ENCODE measurements at regions of chr9 and their contacts with region 1.

Region 1: GRCh38 chr9:19925817-19926503 is 137.1 kb upstream of the SLC24A2 start:
- DNase-seq: peak; percentile 70
- ATAC-seq: peak; percentile 98
- H3K4me3 ChIP-seq: peak overlapping the region; percentile 35
- H3K27ac ChIP-seq: no peak overlapping the region
- H3K4me1 ChIP-seq: peaks cover 6% of the 10 kb centered on the region
- H3K27me3 ChIP-seq: no peaks in the 10 kb centered on the region
- CTCF ChIP-seq: peak; percentile 96

Region 2: DNA sequence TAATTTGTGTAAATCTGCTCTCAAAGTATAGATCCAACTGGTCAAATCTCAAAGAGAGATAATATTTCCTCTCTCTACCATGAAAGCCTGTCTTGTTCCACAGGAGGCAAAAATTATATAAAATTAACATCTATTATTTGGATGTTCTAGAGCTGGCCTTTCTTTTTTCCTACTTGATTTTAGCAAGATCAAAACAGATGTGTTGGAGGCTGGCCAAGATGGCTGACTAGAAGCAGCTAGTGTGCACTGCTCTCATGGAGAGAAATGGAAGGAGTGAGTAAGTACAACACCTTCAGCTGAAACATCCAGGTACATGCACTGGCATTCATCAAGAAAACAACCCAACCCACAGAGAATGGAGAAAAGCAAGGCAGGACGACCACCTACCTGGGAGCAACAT is 161.5 kb after region 1 on chr9:
- intact Hi-C with region 1: no loop called
- DNase-seq: no peak
- ATAC-seq: no peak
- H3K4me3 ChIP-seq: no peak overlapping the region
- H3K27ac ChIP-seq: no peak overlapping the region
- H3K4me1 ChIP-seq: no peaks in the 10 kb centered on the region
- H3K27me3 ChIP-seq: peaks cover 12% of the 10 kb centered on the region
- CTCF ChIP-seq: no peak

Region 3: GRCh38 chr9:20941174-20941690 is 1015.3 kb after region 1 on chr9:
- intact Hi-C with region 1: loop called (anchors 5 kb)
- DNase-seq: no peak
- ATAC-seq: peak; percentile 97
- H3K4me3 ChIP-seq: no peak overlapping the region
- H3K27ac ChIP-seq: no peak overlapping the region
- H3K4me1 ChIP-seq: no peaks in the 10 kb centered on the region
- H3K27me3 ChIP-seq: no peaks in the 10 kb centered on the region
- CTCF ChIP-seq: peak; percentile 88

Region 4: DNA sequence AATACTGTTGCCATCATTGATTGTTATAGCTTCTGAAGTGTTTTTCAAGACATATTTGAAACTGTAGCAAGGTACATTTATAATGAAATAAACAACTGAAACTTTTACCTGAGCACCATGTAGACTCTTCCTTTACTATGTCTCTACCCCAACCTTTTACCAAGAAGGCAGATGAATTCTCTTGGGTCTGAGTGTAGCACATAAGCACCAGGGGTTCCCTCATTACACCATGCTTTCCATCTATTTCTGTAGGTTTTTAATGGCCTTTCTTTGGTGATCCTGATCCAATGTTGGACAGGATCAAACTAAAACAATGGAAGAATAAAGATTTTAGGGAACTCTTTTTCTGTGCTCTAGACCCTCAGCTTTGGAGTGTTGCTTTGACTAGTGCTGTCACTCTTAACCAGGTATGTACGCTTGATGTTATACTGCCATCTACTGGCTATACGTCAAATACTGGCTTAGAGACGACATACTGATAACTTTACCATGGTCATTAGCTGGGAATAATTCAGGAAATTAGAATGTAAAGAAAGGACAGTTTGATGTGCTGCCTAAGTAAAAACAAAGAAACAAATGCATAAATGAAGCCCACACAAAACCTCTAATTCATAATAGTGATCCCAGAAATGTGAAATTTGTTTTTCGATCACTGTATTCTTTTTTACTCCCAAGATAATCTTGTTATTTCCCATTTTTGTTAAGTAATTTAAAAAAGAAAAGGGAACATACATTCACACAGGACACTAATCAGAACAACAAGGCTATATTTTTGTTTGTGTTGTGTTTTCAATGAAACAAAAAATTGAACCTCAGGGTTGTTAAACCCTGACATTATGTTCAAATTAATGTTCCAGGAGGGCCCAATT is 1185.0 kb after region 1 on chr9:
- intact Hi-C with region 1: loop called (anchors 10 kb)
- DNase-seq: no peak
- ATAC-seq: peak; percentile 96
- H3K4me3 ChIP-seq: no peak overlapping the region
- H3K27ac ChIP-seq: no peak overlapping the region
- H3K4me1 ChIP-seq: no peaks in the 10 kb centered on the region
- H3K27me3 ChIP-seq: no peaks in the 10 kb centered on the region
- CTCF ChIP-seq: peak; percentile 86